Right ventricle myocardium inferior (tissue), 1 donor: ENCODE measurements at regions of chr5 and their contacts with region 1.

Region 1: GRCh38 chr5:148740966-148741742 is 85.3 kb upstream of the ADRB2 start:
- DNase-seq: no peak
- ATAC-seq: peak; percentile 66

Region 2: GRCh38 chr5:148805326-148806290 is 64.5 kb after region 1 on chr5:
- intact Hi-C with region 1: loop called (anchors 5 kb)
- DNase-seq: peak; percentile 75
- ATAC-seq: peak; percentile 91

Region 3: DNA sequence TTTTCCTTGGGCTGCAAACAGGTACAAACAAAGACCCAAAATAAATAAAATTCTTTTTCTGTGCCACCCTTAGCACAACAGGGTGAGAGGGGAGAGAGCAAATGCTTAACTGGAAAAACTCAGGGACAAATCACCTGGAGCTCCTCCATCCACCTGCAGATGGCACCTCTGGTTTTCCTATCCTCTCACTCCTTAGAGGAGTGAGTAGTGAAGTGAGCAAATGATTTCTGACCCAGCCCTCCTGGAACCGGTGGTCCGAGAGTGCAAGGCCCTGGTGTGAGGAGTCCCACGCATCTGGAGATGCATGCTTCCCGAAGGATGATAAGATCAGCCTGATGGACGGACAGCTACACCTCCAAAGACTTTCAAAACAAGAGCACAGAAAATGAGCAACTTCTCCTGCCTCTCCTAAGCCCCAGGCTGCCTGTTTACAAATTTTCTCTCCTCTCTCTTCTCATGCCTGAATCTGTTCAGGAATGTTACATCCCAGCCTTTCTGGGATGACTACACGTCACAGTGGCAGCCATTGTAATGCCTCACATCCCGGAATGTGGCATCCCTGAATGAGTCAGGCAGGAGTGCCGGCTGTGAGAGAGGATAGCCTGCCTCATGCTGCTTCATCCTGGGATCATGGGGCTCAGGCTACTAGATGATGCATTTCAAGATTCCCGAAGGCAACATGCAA is 171.7 kb after region 1 on chr5:
- intact Hi-C with region 1: no loop called
- DNase-seq: no peak
- ATAC-seq: no peak

Region 4: GRCh38 chr5:148957591-148958202 is 216.5 kb after region 1 on chr5:
- intact Hi-C with region 1: loop called (anchors 2 kb)
- DNase-seq: no peak
- ATAC-seq: no peak

Region 5: GRCh38 chr5:149002053-149002452 is 260.9 kb after region 1 on chr5:
- intact Hi-C with region 1: loop called (anchors 2 kb)
- DNase-seq: no peak
- ATAC-seq: peak; percentile 55